ENCODE measurements at regions of chr15 and their contacts with region 1.

Region 1: GRCh38 chr15:74906446-74907162 is at the start of gene FAM219B:
- DNase-seq: peak; percentile 85
- H3K4me3 Mint-ChIP-seq: peak within 1 kb of the TSS; percentile 99
- H3K27ac Mint-ChIP-seq: peak within 1 kb of the TSS; percentile 94
- H3K4me1 Mint-ChIP-seq: peaks cover 44% of the 10 kb centered on the region
- H3K27me3 Mint-ChIP-seq: no peaks in the 10 kb centered on the region

Region 2: GRCh38 chr15:74842581-74843444 is 63.8 kb before region 1 on chr15 and contains the start of gene ULK3:
- CTCF ChIA-PET with region 1: interaction called, 27 read pairs
- DNase-seq: peak; percentile 95
- H3K4me3 Mint-ChIP-seq: peak within 1 kb of the TSS; percentile 95
- H3K27ac Mint-ChIP-seq: peak within 1 kb of the TSS; percentile 92
- H3K4me1 Mint-ChIP-seq: peaks cover 61% of the 10 kb centered on the region
- H3K27me3 Mint-ChIP-seq: no peaks in the 10 kb centered on the region

Region 3: GRCh38 chr15:74873036-74873755 is 33.4 kb before region 1 on chr15 and contains the start of gene SCAMP2:
- CTCF ChIA-PET with region 1: interaction called, 29 read pairs
- DNase-seq: peak; percentile 95
- H3K4me3 Mint-ChIP-seq: peak within 1 kb of the TSS; percentile 91
- H3K27ac Mint-ChIP-seq: peak within 1 kb of the TSS; percentile 94
- H3K4me1 Mint-ChIP-seq: peaks cover 54% of the 10 kb centered on the region
- H3K27me3 Mint-ChIP-seq: peaks cover 10% of the 10 kb centered on the region

Region 4: DNA sequence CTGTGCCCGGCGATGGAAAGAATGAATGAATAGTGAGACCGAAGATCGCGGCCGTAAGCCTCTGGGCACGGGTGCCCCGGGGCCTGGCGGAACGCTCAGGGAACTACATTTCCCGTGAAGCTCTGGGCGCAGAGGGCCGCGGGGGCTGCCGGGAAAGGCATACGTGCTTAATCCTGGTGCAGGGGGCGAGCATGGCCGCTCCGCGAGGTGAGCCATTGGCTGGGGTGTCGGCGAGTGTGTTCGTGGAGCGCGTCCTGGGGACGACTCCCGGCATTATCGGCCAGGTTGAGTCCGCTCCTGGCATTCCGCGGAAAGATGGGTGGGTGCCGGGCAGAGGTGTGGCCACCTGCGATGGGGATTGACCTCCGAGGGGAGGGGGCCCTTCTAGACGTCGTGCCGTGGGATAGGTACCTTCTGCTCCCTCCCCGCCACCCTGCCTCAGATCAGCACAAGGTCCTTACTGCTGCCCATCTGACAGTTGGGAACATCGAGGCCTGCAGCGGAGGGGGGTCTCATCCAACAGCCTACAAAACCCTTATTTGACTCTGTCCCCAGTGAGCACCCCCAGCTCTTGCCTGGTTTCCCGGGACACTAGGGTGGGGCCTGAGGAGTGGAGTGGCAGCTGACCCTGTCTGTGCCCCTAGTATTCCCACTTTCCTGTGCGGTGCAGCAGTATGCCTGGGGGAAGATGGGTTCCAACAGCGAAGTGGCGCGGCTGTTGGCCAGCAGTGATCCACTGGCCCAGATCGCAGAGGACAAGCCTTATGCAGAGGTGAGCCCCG is 16.5 kb before region 1 on chr15 and contains the start of gene MPI:
- CTCF ChIA-PET with region 1: interaction called, 17 read pairs
- DNase-seq: peak; percentile 93
- H3K4me3 Mint-ChIP-seq: peak within 1 kb of the TSS; percentile 78
- H3K27ac Mint-ChIP-seq: peak within 1 kb of the TSS; percentile 99
- H3K4me1 Mint-ChIP-seq: peaks cover 56% of the 10 kb centered on the region
- H3K27me3 Mint-ChIP-seq: no peaks in the 10 kb centered on the region

Region 5: DNA sequence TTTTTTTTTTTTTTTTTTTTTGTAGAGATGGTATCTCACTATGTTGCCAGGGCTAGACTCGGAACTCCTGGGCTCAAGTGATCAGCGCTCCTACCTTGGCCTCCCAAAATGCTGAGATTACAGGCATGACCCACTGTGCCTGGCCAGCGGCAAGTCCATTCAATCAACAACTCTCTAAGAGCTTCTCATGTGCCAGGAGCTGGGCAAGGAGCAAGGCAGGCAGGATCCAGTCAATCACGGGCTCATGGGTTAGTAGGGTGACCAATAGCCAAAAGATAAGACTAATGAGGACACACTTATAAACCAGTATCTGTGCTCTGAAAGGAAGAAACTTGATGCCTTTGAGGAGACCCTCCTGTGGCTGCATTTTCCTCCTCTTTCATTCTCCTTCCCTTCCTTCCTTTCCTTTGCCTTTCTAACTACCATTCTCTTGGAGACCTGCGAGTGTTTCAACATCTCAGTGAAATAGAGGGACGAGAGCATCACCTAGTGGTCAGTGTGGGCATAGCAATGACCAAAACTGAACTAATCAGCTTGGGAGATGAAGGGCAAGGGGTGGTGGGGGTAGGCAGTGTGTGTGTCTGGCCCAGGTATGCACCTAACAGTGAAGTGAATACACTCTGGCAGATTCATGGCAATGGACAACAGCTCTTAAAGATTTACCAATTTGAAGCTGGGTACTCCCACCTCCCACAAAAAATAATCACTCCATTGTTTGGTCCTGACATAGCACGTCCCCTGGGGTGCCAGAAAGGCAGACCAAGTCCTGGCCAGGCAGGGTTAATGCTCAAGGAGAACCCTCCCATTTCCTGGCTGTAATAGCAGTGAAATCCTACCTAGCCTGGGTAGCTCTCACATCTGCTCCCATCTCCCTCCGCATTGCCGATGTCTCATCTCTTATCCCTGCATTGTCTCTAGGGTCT is 43.7 kb after region 1 on chr15:
- CTCF ChIA-PET with region 1: interaction called, 18 read pairs
- DNase-seq: peak; percentile 88
- H3K4me3 Mint-ChIP-seq: no peak overlapping the region
- H3K27ac Mint-ChIP-seq: no peak overlapping the region
- H3K4me1 Mint-ChIP-seq: peaks cover 15% of the 10 kb centered on the region
- H3K27me3 Mint-ChIP-seq: peaks cover 29% of the 10 kb centered on the region